ENCODE measurements at regions of chr7 and their contacts with region 1.

Region 1: GRCh38 chr7:92245487-92246362 is at the starts of genes ANKIB1 and KRIT1:
- DNase-seq: peak; percentile 83 to 90 (median 86)
- H3K4me3 ChIP-seq: peak within 1 kb of the TSS; percentile 91
- H3K27ac ChIP-seq: peak within 1 kb of the TSS; percentile 80 to 81
- H3K4me1 ChIP-seq: peaks cover 3% of the 10 kb centered on the region
- H3K27me3 ChIP-seq: no peaks in the 10 kb centered on the region
- CTCF ChIP-seq: peak in 1 of 3 donors; percentile 27
- EP300 ChIP-seq: no peak
- POLR2A ChIP-seq: peak; percentile 72
- total RNA-seq, gene ANKIB1: 30.8 to 83.1 (median 61.4) TPM
- total RNA-seq, gene KRIT1: 46.8 to 65.0 (median 53.1) TPM

Region 2: DNA sequence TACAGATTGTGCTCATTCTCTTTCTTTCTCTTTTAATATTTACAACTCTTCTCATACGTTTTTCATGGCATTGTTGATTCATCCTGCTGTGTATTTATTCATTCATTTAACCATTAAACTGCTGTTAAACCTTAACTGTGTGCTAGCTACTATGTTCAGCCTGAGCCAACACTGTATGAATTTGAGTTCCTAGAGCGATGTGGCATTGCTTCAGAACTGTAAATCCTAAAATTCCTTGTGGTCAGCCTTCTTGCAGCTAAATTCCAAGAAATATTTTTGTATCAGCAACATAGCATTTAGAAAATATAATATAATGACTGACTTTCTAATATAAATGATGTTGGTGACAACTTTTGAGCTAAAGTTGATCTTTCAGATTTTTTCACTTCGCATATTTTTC is 1166.2 kb before region 1 on chr7:
- intact Hi-C with region 1: no loop called
- DNase-seq: no peak
- H3K4me3 ChIP-seq: no peak overlapping the region
- H3K27ac ChIP-seq: no peak overlapping the region
- H3K4me1 ChIP-seq: peaks cover 3% of the 10 kb centered on the region
- H3K27me3 ChIP-seq: no peaks in the 10 kb centered on the region
- CTCF ChIP-seq: no peak
- EP300 ChIP-seq: no peak
- POLR2A ChIP-seq: no peak

Region 3: DNA sequence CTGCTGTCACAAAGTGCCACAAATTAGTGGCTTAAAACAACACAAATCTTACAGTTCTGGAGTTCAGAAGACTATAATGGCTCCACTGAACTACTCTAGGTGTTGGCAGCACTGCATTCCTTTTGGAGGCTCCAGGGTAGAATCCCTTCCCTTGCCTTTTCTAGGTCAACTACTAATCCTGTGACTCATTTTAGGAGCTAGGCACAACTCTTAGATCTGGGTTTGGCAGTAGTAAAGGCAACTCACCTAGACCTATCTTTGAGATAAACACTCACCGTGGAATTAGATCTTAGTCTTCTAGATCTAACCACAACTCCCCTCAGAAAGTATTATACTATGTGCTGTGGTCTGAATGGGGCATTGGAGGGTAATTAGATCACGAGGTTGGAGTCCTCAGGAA is 60.4 kb after region 1 on chr7:
- intact Hi-C with region 1: no loop called
- DNase-seq: no peak
- H3K4me3 ChIP-seq: no peak overlapping the region
- H3K27ac ChIP-seq: no peak overlapping the region
- H3K4me1 ChIP-seq: no peaks in the 10 kb centered on the region
- H3K27me3 ChIP-seq: no peaks in the 10 kb centered on the region
- CTCF ChIP-seq: no peak
- EP300 ChIP-seq: no peak
- POLR2A ChIP-seq: no peak

Region 4: DNA sequence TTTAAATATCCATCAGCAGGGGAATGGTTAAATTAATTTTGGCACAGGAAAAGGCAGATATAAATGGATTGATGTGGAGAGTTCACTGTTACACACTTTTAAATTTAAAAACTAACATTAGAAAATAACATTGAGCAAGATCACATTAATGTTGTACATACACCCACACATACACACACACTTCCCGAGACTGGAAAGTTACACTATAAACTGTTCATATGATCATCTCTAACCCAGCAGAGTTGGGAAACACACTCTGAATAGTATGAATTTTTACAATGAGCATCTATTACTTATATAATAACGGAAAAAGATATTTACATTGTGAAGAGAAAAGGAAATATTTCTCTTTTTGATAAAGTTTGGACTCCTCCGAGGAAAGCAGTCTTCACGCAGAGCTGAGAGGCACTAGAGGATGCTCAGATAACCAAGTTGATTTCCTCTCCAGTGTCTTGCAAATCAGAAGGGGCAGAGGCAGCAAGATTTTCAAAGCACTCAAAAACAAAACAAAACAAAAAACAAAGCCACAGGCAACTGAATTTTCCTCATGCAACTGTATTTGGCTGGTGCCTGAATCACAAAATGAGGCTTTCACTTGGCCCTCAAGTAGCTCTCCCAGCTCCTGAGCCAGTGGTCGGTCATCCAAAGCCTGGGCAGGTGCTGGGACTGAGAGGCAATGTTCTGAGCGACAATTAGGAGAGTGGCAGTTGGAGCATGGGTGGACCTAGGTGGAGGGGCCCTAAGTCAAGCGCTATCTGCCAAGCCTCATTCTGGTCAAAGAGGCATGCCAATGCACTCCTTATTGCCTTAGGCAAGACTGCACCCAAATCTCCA is 191.1 kb after region 1 on chr7:
- intact Hi-C with region 1: loop called in 2 of 4 experiments (anchors 10 kb)
- DNase-seq: no peak
- H3K4me3 ChIP-seq: no peak overlapping the region
- H3K27ac ChIP-seq: no peak overlapping the region
- H3K4me1 ChIP-seq: no peaks in the 10 kb centered on the region
- H3K27me3 ChIP-seq: no peaks in the 10 kb centered on the region
- CTCF ChIP-seq: no peak
- EP300 ChIP-seq: no peak
- POLR2A ChIP-seq: no peak

Measured in ovary (tissue), 10 donors.